GM12878 (cell line): ENCODE measurements at regions of chr16 and their contacts with region 1.

Region 1: DNA sequence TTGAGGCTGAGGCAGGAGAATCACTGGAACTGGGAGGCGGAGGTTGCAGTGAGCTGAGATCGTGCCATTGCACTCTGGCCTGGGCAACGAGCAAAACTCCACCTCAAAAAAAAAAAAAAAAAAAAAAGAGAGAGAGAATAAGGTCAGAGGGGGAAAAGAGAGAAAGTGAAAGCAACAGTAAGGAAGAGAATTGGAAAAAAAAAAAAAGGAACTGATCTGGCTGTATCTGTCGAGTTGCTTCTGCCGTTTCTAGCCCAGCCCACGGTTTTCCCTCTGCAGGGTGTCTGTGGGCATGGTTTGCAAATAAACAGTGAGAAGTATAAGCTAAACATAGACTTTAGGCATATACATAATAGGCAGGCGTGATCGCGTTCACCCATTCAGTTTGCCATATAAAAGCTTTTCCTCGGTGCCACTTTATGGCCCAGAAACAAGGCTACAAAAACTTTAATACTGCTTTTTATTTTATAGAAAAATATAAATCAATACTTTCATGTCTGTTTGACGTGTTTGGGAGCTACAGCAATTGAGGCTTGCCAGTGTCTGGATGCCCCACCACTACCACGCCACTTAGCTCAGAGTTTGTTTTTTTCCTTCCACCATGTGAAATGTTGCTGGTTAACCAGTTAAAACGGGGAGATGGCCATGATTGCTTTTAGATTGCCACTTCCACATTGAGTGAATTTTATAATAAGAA is 436.7 kb downstream of the MAF start:
- DNase-seq: no peak
- ATAC-seq: peak; percentile 34; the same call in 2 of the 3 replicates
- H3K4me3 ChIP-seq: no peak overlapping the region
- H3K27ac ChIP-seq: no peak overlapping the region
- H3K4me1 ChIP-seq: no peaks in the 10 kb centered on the region
- H3K27me3 ChIP-seq: no peaks in the 10 kb centered on the region
- CTCF ChIP-seq: no peak
- EP300 ChIP-seq: no peak
- POLR2A ChIP-seq: no peak
- RAD21 ChIP-seq: no peak

Region 2: GRCh38 chr16:79137396-79137939 is 26.4 kb before region 1 on chr16:
- CTCF ChIA-PET with region 1: no interaction called
- POLR2A ChIA-PET with region 1: no interaction called
- RAD21 ChIA-PET with region 1: no interaction called
- SMC1A ChIA-PET with region 1: no interaction called
- in situ Hi-C with region 1: no loop called
- intact Hi-C with region 1: no loop called
- DNase-seq: no peak
- ATAC-seq: no peak
- H3K4me3 ChIP-seq: no peak overlapping the region
- H3K27ac ChIP-seq: no peak overlapping the region
- H3K4me1 ChIP-seq: no peaks in the 10 kb centered on the region
- H3K27me3 ChIP-seq: no peaks in the 10 kb centered on the region; a peak in 1 of 4 replicates
- CTCF ChIP-seq: no peak
- EP300 ChIP-seq: no peak
- POLR2A ChIP-seq: no peak
- RAD21 ChIP-seq: no peak

Region 3: GRCh38 chr16:79175286-79176057 is 11.6 kb after region 1 on chr16:
- CTCF ChIA-PET with region 1: interaction called, 3 read pairs
- POLR2A ChIA-PET with region 1: interaction called, 3 read pairs
- RAD21 ChIA-PET with region 1: interaction called, 7 read pairs
- SMC1A ChIA-PET with region 1: interaction called, 13 read pairs
- in situ Hi-C with region 1: no loop called
- intact Hi-C with region 1: no loop called
- DNase-seq: no peak
- ATAC-seq: no peak
- H3K4me3 ChIP-seq: no peak overlapping the region
- H3K27ac ChIP-seq: no peak overlapping the region
- H3K4me1 ChIP-seq: no peaks in the 10 kb centered on the region
- H3K27me3 ChIP-seq: no peaks in the 10 kb centered on the region
- CTCF ChIP-seq: no peak
- EP300 ChIP-seq: no peak
- POLR2A ChIP-seq: no peak
- RAD21 ChIP-seq: no peak